Naive thymus-derived CD4-positive, alpha-beta T cell (primary cell): ENCODE measurements at regions of chr19 and their contacts with region 1.

Region 1: DNA sequence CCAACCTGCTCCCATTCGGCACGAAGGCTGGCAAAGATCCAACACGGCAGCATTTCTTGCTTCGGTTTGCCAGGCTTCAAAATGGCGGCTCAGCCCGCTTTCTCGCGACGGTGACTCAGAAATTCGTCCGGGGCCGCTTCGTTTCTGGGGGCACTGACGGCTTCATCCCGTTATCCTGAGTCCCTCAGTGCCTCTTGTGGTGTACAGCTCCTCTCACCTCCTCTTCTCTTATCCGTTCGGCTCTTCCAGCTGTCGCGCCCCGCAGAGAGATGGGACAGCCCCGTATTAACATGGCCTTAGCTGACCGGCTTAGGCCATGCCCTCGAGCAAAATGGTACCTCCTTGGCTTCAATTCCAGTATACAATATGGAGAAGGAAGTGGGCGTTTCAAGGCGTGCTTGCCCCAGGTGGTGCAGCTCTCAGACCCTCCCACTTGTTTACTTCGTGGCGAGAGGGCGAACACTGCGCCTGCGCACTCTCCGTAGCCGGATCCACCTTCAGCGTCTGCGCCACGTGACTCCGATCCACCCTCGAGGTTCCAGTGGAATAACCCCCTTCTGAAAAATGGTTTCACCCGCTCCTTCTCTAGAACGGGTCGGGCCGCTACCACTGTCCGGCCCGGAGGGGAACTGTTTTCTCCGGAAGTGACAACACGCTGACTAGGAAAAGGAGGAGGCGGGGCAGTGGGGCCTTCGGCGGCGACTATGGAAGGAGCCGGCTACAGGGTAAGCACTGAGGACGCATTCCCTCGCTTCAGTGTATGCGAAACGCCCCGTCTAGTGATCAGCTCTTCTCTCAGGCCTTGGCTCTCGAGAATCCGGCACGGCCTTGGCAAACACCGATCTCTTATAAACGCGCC is at the starts of genes AKT1S1 and TBC1D17:
- DNase-seq: peak; percentile 90 to 100 (median 99)
- ATAC-seq: peak; percentile 81
- H3K4me3 ChIP-seq: peak within 1 kb of the TSS; percentile 96
- H3K4me3 Mint-ChIP-seq: no peak within 1 kb of the TSS
- H3K27ac ChIP-seq: peak within 1 kb of the TSS; percentile 97
- H3K27ac Mint-ChIP-seq: no peak within 1 kb of the TSS
- H3K4me1 ChIP-seq: peaks cover 11 to 20% of the 10 kb centered on the region in 2 donors
- H3K4me1 Mint-ChIP-seq: peaks cover 23 to 35% (median 28%) of the 10 kb centered on the region in 7 donors
- H3K27me3 ChIP-seq: no peaks in the 10 kb centered on the region
- H3K27me3 Mint-ChIP-seq: no peaks in the 10 kb centered on the region
- total RNA-seq, gene AKT1S1: 15.9 to 25.7 (median 21.2) TPM
- total RNA-seq, gene TBC1D17: 42.9 to 106 (median 53.0) TPM

Region 2: GRCh38 chr19:48468775-48469288 is 1408.4 kb before region 1 on chr19:
- CTCF ChIA-PET with region 1: no interaction called
- POLR2A ChIA-PET with region 1: no interaction called
- intact Hi-C with region 1: loop called in 1 of 2 experiments (anchors 2 kb)
- DNase-seq: peak; percentile 93 to 100 (median 100)
- ATAC-seq: peak; percentile 93
- H3K4me3 ChIP-seq: peak overlapping the region; percentile 93
- H3K4me3 Mint-ChIP-seq: peak overlapping the region; percentile 81 to 96 (median 92)
- H3K27ac ChIP-seq: peak overlapping the region; percentile 86
- H3K27ac Mint-ChIP-seq: peak overlapping the region; percentile 85 to 96 (median 90)
- H3K4me1 ChIP-seq: peaks cover 7 to 15% of the 10 kb centered on the region in 2 donors
- H3K4me1 Mint-ChIP-seq: peaks cover 0 to 30% (median 18%) of the 10 kb centered on the region in 7 donors
- H3K27me3 ChIP-seq: no peaks in the 10 kb centered on the region
- H3K27me3 Mint-ChIP-seq: no peaks in the 10 kb centered on the region

Region 3: DNA sequence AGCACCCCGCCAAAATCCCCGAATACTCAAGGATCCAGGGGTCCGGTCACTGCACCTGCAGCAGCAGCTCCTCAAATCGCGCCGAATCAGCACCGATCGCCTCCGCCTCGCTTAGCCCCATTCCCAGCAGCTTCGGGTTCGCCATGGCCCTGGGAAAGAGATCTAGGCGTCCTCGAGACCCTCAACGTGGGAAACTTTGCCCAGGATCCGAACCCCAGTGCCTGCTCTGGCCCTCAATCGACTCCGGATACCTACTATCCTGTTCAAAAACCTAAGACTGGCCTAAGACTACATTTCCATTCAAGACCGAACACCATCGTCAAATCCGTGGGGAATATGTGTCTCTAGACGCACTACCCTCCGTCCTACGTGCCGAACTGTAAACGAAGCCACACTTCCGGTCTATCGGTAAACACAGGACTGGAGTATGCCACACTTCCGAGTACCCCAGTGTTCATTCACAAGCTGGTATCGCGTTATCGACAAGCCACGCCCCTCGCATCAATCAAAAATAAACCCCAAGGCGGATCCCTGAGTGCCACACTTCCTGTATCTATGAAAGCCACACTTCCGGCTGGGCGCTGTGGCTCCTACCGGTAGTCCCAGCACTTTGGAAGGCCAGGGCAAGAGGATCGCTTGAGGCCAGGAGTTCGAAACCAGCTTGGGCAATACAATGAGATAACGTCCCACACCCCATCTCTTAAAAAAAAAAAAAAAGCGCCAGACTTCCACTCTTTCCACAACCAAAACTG is 425.6 kb before region 1 on chr19 and contains the start of gene PIH1D1:
- CTCF ChIA-PET with region 1: no interaction called
- POLR2A ChIA-PET with region 1: no interaction called
- intact Hi-C with region 1: loop called (anchors 1 to 2 kb)
- DNase-seq: peak; percentile 69 to 97 (median 94)
- ATAC-seq: peak; percentile 71
- H3K4me3 ChIP-seq: peak within 1 kb of the TSS; percentile 85
- H3K4me3 Mint-ChIP-seq: peak within 1 kb of the TSS; percentile 95 to 100 (median 99)
- H3K27ac ChIP-seq: peak within 1 kb of the TSS; percentile 95
- H3K27ac Mint-ChIP-seq: peak within 1 kb of the TSS; percentile 92 to 100 (median 99)
- H3K4me1 ChIP-seq: peaks cover 15 to 26% of the 10 kb centered on the region in 2 donors
- H3K4me1 Mint-ChIP-seq: peaks cover 31 to 68% (median 55%) of the 10 kb centered on the region in 7 donors
- H3K27me3 ChIP-seq: no peaks in the 10 kb centered on the region
- H3K27me3 Mint-ChIP-seq: no peaks in the 10 kb centered on the region
- total RNA-seq, gene PIH1D1: 136 to 183 (median 159) TPM

Region 4: GRCh38 chr19:49665351-49666119 is 211.7 kb before region 1 on chr19 and contains the starts of genes BCL2L12 and IRF3:
- CTCF ChIA-PET with region 1: no interaction called
- POLR2A ChIA-PET with region 1: interaction called, 7 read pairs
- intact Hi-C with region 1: loop called in 1 of 2 experiments (anchors 2 kb)
- DNase-seq: peak; percentile 99
- ATAC-seq: peak; percentile 90
- H3K4me3 ChIP-seq: peak within 1 kb of the TSS; percentile 95
- H3K4me3 Mint-ChIP-seq: peak within 1 kb of the TSS; percentile 97 to 100 (median 99)
- H3K27ac ChIP-seq: peak within 1 kb of the TSS; percentile 80
- H3K27ac Mint-ChIP-seq: peak within 1 kb of the TSS; percentile 96 to 99 (median 97)
- H3K4me1 ChIP-seq: peaks cover 23% of the 10 kb centered on the region in 2 donors
- H3K4me1 Mint-ChIP-seq: peaks cover 24 to 47% (median 39%) of the 10 kb centered on the region in 7 donors
- H3K27me3 ChIP-seq: no peaks in the 10 kb centered on the region
- H3K27me3 Mint-ChIP-seq: peaks cover 0 to 2% (median 0%) of the 10 kb centered on the region in 5 donors
- total RNA-seq, gene BCL2L12: 11.3 to 57.2 (median 22.6) TPM
- total RNA-seq, gene IRF3: 176 to 346 (median 212) TPM

Region 5: DNA sequence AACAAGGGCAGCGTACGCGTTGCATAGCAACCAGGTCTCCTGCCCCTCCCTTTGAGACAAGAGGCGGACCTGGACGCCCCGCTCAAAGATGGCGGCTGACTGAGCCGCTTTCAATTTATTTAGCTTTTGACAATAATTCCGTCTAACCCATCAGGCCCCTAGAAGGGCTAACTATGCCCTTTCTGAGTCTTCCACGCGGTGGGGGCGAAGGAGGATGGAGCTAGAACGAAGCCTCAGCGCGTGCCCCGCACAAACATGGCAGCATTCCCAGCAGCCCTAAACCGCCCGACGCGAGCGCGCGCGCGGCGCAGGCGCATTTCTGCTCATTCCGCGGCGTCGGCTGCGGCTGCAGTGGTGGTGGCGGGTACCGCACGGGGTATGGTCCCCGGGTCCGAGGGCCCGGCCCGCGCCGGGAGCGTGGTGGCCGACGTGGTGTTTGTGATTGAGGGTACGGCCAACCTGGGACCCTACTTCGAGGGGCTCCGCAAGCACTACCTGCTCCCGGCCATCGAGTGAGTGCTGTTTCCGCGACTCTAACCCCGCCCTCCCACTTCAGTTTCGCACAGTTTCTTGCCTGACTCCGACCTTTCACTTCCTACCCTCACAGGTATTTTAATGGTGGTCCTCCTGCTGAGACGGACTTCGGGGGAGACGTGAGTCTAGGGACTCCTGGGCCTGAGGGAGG is 59.1 kb before region 1 on chr19 and contains the start of gene MED25:
- CTCF ChIA-PET with region 1: interaction called, 3 read pairs
- POLR2A ChIA-PET with region 1: interaction called, 21 read pairs
- intact Hi-C with region 1: loop called (anchors 1 kb)
- DNase-seq: peak; percentile 87 to 96 (median 94)
- ATAC-seq: peak; percentile 65
- H3K4me3 ChIP-seq: peak within 1 kb of the TSS; percentile 91
- H3K4me3 Mint-ChIP-seq: peak within 1 kb of the TSS; percentile 94 to 100 (median 98)
- H3K27ac ChIP-seq: peak within 1 kb of the TSS; percentile 88
- H3K27ac Mint-ChIP-seq: peak within 1 kb of the TSS; percentile 96 to 100 (median 100)
- H3K4me1 ChIP-seq: peaks cover 11 to 17% of the 10 kb centered on the region in 2 donors
- H3K4me1 Mint-ChIP-seq: peaks cover 20 to 51% (median 39%) of the 10 kb centered on the region in 7 donors
- H3K27me3 ChIP-seq: no peaks in the 10 kb centered on the region
- H3K27me3 Mint-ChIP-seq: no peaks in the 10 kb centered on the region
- total RNA-seq, gene MED25: 36.8 to 75.2 (median 55.4) TPM

Region 6: DNA sequence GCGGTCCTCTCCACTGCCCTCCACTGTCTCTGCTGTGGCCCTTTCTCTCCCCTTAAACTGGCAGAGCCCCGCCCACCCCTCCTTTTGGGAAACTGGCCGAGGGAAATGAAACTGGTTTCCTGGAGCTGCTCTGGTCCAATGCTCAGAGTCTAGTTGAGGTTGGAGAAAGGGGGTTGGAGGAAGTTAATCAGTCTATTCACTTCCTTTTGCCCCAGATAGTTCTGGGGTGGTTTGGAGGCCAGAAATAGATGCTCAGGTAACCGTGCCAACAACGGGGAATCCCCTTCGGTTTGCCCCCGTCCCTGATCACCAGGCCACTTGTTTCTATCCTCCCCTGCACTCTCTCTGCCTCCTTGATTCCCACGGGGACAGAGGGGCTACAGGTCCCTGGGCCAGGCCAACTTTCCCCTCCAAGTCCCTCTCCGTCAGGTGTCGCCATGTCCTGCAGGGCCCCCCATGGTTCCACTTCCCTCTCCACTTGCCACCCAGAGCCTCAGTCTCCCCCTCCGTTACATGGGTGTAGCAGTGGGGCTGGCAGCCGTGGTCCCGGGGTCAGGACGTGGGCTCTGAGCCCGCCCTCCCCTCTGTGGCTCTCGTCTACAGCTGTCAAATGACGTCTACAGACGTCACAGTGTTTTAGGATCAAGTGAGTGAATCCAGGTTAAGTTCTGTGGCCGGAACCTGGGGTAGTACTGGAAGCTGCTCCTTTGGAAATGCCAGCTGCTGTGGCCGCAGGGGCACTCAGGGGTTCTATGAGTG is 19.8 kb after region 1 on chr19 and contains the start of gene IL4I1:
- CTCF ChIA-PET with region 1: no interaction called
- POLR2A ChIA-PET with region 1: interaction called, 7 read pairs
- intact Hi-C with region 1: loop called in 1 of 2 experiments (anchors 1 kb)
- DNase-seq: peak in 8 of 9 donors; percentile 15 to 62 (median 38)
- ATAC-seq: peak; percentile 72
- H3K4me3 ChIP-seq: peak within 1 kb of the TSS; percentile 36
- H3K4me3 Mint-ChIP-seq: peak within 1 kb of the TSS; percentile 26 to 81 (median 74)
- H3K27ac ChIP-seq: peak within 1 kb of the TSS; percentile 56
- H3K27ac Mint-ChIP-seq: peak within 1 kb of the TSS; percentile 79 to 97 (median 91)
- H3K4me1 ChIP-seq: peaks cover 18 to 19% of the 10 kb centered on the region in 2 donors
- H3K4me1 Mint-ChIP-seq: peaks cover 15 to 41% (median 23%) of the 10 kb centered on the region in 7 donors
- H3K27me3 ChIP-seq: no peaks in the 10 kb centered on the region
- H3K27me3 Mint-ChIP-seq: no peaks in the 10 kb centered on the region
- total RNA-seq, gene IL4I1: 1.2 to 6.8 (median 1.9) TPM

Region 7: DNA sequence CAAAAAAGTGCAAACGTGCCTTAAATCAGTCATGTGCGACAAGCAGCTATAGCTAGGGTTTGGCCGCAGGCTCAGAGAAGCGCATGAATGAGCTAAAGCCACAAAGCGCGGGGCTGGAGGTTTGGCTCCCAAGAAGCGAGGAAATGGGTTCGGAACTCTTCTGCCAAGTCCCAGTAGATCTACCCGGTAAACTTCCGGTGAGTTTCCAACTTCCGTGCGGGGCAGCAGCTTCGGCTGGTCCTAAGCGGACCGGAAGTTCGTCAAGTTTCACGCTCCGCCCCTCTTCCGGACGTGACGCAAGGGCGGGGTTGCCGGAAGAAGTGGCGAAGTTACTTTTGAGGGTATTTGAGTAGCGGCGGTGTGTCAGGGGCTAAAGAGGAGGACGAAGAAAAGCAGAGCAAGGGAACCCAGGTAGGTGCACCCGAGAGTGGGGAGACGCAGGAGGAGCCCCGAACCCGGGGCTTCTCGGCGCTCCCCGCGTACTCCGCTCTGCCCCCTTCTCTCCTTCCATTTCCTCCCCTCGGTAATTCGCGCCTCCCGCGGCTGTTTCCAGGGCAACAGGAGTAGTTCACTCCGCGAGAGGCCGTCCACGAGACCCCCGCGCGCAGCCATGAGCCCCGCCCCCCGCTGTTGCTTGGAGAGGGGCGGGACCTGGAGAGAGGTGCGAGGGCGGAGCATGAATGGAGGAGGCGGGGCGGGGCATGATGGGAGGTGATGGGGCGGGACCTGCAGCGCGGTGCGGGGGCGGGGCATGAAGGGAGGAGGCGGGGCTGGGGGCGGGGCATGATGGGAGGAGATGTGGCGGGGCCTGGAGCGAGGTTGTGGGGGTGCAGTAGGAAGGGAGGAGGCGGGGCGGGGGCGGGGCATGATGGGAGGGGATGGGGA is 499.2 kb after region 1 on chr19 and contains the start of gene NR1H2:
- CTCF ChIA-PET with region 1: no interaction called
- POLR2A ChIA-PET with region 1: interaction called, 3 read pairs
- intact Hi-C with region 1: loop called in 1 of 2 experiments (anchors 1 kb)
- DNase-seq: peak; percentile 89 to 97 (median 95)
- ATAC-seq: peak; percentile 94
- H3K4me3 ChIP-seq: peak within 1 kb of the TSS; percentile 99
- H3K4me3 Mint-ChIP-seq: peak within 1 kb of the TSS; percentile 92 to 100 (median 98)
- H3K27ac ChIP-seq: peak within 1 kb of the TSS; percentile 100
- H3K27ac Mint-ChIP-seq: peak within 1 kb of the TSS; percentile 99 to 100 (median 100)
- H3K4me1 ChIP-seq: peaks cover 4 to 10% of the 10 kb centered on the region in 2 donors
- H3K4me1 Mint-ChIP-seq: peaks cover 12 to 37% (median 24%) of the 10 kb centered on the region in 7 donors
- H3K27me3 ChIP-seq: no peaks in the 10 kb centered on the region
- H3K27me3 Mint-ChIP-seq: no peaks in the 10 kb centered on the region
- total RNA-seq, gene NR1H2: 66.6 to 284 (median 114) TPM